Breast epithelium (tissue), 4 donors: ENCODE measurements at regions of chr7 and their contacts with region 1.

Region 1: GRCh38 chr7:21011118-21011517 is 224.4 kb upstream of the SP8 start:
- DNase-seq: peak in 1 of 2 donors; percentile 77
- H3K4me3 ChIP-seq: no peak overlapping the region
- H3K27ac ChIP-seq: no peak overlapping the region
- H3K4me1 ChIP-seq: no peaks in the 10 kb centered on the region
- H3K27me3 ChIP-seq: no peaks in the 10 kb centered on the region
- CTCF ChIP-seq: no peak
- POLR2A ChIP-seq: no peak

Region 2: GRCh38 chr7:20963556-20964280 is 47.4 kb before region 1 on chr7:
- intact Hi-C with region 1: loop called (anchors 2 kb)
- DNase-seq: no peak
- H3K4me3 ChIP-seq: no peak overlapping the region
- H3K27ac ChIP-seq: no peak overlapping the region
- H3K4me1 ChIP-seq: no peaks in the 10 kb centered on the region
- H3K27me3 ChIP-seq: no peaks in the 10 kb centered on the region
- CTCF ChIP-seq: no peak
- POLR2A ChIP-seq: no peak

Region 3: DNA sequence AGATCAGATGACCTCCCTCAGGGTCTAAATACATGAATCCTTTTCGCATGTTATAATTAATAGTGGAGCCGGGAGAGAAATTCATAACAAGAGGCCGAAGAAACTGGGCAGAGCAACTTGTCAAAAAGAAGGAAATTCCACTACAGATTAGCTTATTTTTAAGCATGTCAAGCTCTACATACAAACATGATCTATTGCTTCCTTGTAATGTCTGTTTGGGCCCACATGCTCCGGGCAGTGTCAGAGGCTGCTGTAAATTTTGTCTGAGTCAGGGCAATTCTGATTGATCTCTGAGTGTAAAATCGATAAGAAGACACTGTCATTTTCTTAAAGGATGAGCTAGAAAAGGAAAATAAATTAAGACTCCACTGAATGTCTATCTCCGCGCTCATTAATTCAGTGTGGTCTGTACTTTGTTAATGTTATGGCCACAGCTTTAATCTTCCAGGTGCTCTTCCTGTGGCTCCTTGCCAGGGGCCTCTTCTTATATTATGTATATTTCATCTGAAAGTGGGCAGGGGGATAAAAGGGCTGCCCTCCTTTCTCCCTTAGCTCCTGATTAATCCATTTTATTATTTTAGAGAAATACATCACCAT is 30.4 kb before region 1 on chr7:
- intact Hi-C with region 1: no loop called
- DNase-seq: no peak
- H3K4me3 ChIP-seq: no peak overlapping the region
- H3K27ac ChIP-seq: no peak overlapping the region
- H3K4me1 ChIP-seq: no peaks in the 10 kb centered on the region
- H3K27me3 ChIP-seq: no peaks in the 10 kb centered on the region
- CTCF ChIP-seq: no peak
- POLR2A ChIP-seq: no peak